ENCODE measurements at regions of chr7 and their contacts with region 1.

Region 1: DNA sequence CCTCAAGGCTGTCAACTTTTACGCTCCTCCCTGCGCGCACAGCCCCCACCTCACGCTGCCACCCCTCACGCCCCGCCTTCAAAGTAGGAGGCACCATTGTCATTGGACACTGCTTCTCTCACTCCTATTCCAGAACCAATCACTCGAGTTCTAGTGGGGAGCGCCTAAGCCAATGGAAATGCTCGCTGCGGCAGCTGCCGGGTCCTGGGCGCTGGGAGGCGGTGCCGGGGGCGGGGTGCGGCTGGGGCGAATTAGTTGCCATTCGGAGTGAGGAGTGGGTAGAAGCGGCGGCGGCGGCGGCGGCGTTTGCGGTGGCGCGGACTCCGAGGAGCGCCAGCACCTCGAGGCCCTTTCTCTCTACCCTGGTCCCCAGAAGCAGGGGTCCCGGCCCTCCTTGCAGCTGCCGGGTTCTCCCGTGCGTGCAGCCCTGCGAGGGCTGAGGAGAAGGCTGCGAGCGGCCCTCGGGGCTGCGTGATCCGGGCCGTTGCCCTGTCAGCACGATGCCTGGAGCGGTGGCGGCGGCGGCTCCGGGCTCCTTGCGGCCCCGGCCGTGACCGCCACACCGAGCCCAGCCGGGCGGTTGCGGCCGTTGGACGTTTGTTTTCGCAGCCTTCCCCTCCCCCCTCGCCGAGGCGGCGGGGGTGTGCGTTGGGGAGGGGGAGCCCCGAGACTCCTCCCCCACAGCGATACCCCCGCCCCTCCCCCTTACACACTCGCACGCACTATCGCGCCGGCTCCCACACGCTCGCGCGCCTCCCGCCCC is at the start of gene GLCCI1:
- DNase-seq: peak; percentile 96 to 98 (median 96)
- H3K4me3 ChIP-seq: peak within 1 kb of the TSS; percentile 96 to 99
- H3K4me3 Mint-ChIP-seq: peak within 1 kb of the TSS; percentile 92 to 100 (median 98)
- H3K27ac ChIP-seq: peak within 1 kb of the TSS; percentile 79
- H3K27ac Mint-ChIP-seq: peak within 1 kb of the TSS; percentile 66 to 99 (median 96)
- H3K4me1 ChIP-seq: peaks cover 50% of the 10 kb centered on the region
- H3K4me1 Mint-ChIP-seq: peaks cover 18 to 29% (median 18%) of the 10 kb centered on the region in 4 donors
- H3K27me3 ChIP-seq: no peaks in the 10 kb centered on the region
- H3K27me3 Mint-ChIP-seq: no peaks in the 10 kb centered on the region
- total RNA-seq, gene GLCCI1: 46.7 to 49.7 TPM

Region 2: GRCh38 chr7:7640221-7641128 is 328.2 kb before region 1 on chr7 and contains the start of gene UMAD1:
- CTCF ChIA-PET with region 1: no interaction called
- POLR2A ChIA-PET with region 1: interaction called, 54 read pairs
- intact Hi-C with region 1: loop called (anchors 1 kb)
- DNase-seq: peak; percentile 97 to 100 (median 100)
- H3K4me3 ChIP-seq: peak within 1 kb of the TSS; percentile 79 to 97
- H3K4me3 Mint-ChIP-seq: peak within 1 kb of the TSS; percentile 91 to 98 (median 96)
- H3K27ac ChIP-seq: peak within 1 kb of the TSS; percentile 91
- H3K27ac Mint-ChIP-seq: peak within 1 kb of the TSS; percentile 95 to 99 (median 99)
- H3K4me1 ChIP-seq: peaks cover 28% of the 10 kb centered on the region
- H3K4me1 Mint-ChIP-seq: peaks cover 25 to 62% (median 42%) of the 10 kb centered on the region in 4 donors
- H3K27me3 ChIP-seq: no peaks in the 10 kb centered on the region
- H3K27me3 Mint-ChIP-seq: no peaks in the 10 kb centered on the region
- total RNA-seq, gene UMAD1: 23.5 to 25.1 TPM

Region 3: GRCh38 chr7:7920481-7920880 is 48.2 kb before region 1 on chr7:
- CTCF ChIA-PET with region 1: no interaction called
- POLR2A ChIA-PET with region 1: interaction called, 51 read pairs
- intact Hi-C with region 1: loop called (anchors 2 kb)
- DNase-seq: peak; percentile 29 to 47 (median 40)
- H3K4me3 ChIP-seq: peak overlapping the region in 1 of 2 donors; percentile 63
- H3K4me3 Mint-ChIP-seq: peak overlapping the region; percentile 78 to 91 (median 83)
- H3K27ac ChIP-seq: no peak overlapping the region
- H3K27ac Mint-ChIP-seq: peak overlapping the region; percentile 30 to 92 (median 90)
- H3K4me1 ChIP-seq: peaks cover 46% of the 10 kb centered on the region
- H3K4me1 Mint-ChIP-seq: peaks cover 30 to 57% (median 38%) of the 10 kb centered on the region in 4 donors
- H3K27me3 ChIP-seq: no peaks in the 10 kb centered on the region
- H3K27me3 Mint-ChIP-seq: no peaks in the 10 kb centered on the region

Region 4: GRCh38 chr7:8015100-8015748 is 46.5 kb after region 1 on chr7:
- CTCF ChIA-PET with region 1: no interaction called
- POLR2A ChIA-PET with region 1: interaction called, 51 read pairs
- intact Hi-C with region 1: loop called (anchors 5 kb)
- DNase-seq: peak in 4 of 5 donors; percentile 33 to 49 (median 38)
- H3K4me3 ChIP-seq: no peak overlapping the region
- H3K4me3 Mint-ChIP-seq: peak overlapping the region; percentile 55 to 81 (median 65)
- H3K27ac ChIP-seq: peak overlapping the region; percentile 24
- H3K27ac Mint-ChIP-seq: peak overlapping the region; percentile 65 to 89 (median 83)
- H3K4me1 ChIP-seq: peaks cover 44% of the 10 kb centered on the region
- H3K4me1 Mint-ChIP-seq: peaks cover 34 to 52% (median 43%) of the 10 kb centered on the region in 4 donors
- H3K27me3 ChIP-seq: no peaks in the 10 kb centered on the region
- H3K27me3 Mint-ChIP-seq: no peaks in the 10 kb centered on the region

Region 5: DNA sequence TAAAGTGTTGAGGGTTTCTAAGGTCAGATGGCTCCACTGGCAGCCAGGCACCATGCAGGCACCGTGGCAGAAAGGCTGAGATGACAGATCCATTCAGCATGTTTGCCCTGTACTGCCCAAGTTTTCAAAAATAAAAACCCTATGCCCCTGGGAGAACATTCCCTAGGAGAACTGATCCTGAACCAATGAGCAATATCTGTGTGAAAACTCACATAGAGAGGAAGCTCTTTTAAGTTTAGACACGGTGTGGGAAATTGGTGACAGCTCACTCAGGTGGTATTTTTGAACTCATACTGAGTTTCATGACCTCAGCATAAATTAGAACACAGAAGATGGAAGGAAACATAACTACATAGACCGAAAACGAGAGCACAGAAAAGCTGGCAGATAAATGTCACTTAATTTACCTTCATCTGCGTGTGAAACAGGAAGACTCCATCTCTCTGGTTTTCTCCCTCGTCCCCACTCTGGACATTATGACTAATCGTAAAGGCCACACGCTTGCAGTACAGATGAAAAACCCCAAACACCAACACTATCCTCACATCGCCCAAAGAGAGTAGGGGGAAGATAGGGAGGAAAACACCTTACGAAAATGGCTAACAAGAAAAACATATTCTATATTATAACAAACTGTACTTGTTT is 165.5 kb after region 1 on chr7:
- CTCF ChIA-PET with region 1: interaction called, 7 read pairs
- POLR2A ChIA-PET with region 1: interaction called, 38 read pairs
- intact Hi-C with region 1: loop called (anchors 1 kb)
- DNase-seq: peak; percentile 38 to 63 (median 48)
- H3K4me3 ChIP-seq: peak overlapping the region in 1 of 2 donors; percentile 15
- H3K4me3 Mint-ChIP-seq: peak overlapping the region; percentile 17 to 85 (median 59)
- H3K27ac ChIP-seq: peak overlapping the region; percentile 57
- H3K27ac Mint-ChIP-seq: peak overlapping the region; percentile 93 to 100 (median 97)
- H3K4me1 ChIP-seq: peaks cover 74% of the 10 kb centered on the region
- H3K4me1 Mint-ChIP-seq: peaks cover 48 to 88% (median 68%) of the 10 kb centered on the region in 4 donors
- H3K27me3 ChIP-seq: no peaks in the 10 kb centered on the region
- H3K27me3 Mint-ChIP-seq: no peaks in the 10 kb centered on the region

Region 6: DNA sequence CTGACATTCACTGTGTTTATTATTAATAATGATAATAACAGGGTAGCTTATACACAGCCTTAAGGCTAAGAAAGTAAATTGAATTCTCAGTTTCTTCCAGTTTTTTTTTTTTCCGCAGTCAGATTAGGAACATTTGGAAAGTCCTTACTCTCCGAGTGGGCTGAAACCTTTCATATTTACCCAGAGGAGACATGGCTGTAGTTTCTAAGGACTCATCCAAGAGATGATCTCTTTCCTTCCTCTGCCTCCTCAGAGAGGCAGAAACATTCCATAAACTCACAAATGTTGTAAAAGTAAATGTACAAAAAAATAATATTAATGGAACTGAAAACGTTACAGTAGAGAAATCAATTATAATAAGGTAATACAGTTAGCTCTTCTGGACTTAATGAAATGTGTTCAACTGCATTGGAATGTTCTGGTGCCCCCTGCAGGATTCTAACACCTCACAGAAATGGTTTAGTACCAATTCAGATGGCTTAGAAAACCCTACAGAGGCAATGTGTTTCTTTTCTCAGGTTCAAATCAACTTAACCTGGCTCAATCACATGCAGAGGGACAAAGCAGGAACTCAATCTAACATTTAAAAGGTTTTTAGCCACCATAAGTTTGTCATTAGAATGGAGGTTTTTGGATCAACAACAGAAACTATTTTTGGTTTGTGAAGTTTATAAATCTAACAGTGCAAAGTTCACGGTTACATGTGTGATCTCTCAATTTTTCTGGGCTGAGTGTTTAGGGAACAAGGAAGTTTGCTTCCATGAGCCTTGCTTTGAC is 221.6 kb after region 1 on chr7:
- CTCF ChIA-PET with region 1: interaction called, 15 read pairs
- POLR2A ChIA-PET with region 1: interaction called, 12 read pairs
- intact Hi-C with region 1: loop called (anchors 1 kb)
- DNase-seq: peak; percentile 67 to 77 (median 68)
- H3K4me3 ChIP-seq: no peak overlapping the region
- H3K4me3 Mint-ChIP-seq: no peak overlapping the region
- H3K27ac ChIP-seq: no peak overlapping the region
- H3K27ac Mint-ChIP-seq: peak overlapping the region in 2 of 7 donors; percentile 8 to 48
- H3K4me1 ChIP-seq: peaks cover 7% of the 10 kb centered on the region
- H3K4me1 Mint-ChIP-seq: peaks cover 13 to 22% (median 18%) of the 10 kb centered on the region in 4 donors
- H3K27me3 ChIP-seq: no peaks in the 10 kb centered on the region
- H3K27me3 Mint-ChIP-seq: no peaks in the 10 kb centered on the region

Measured in CD4-positive, alpha-beta memory T cell (primary cell).